Vagina (tissue), 2 donors: ENCODE measurements at regions of chr17 and their contacts with region 1.

Region 1: GRCh38 chr17:12667299-12667958 is 1.7 kb downstream of the MYOCD start:
- DNase-seq: no peak
- H3K4me3 ChIP-seq: peak overlapping the region; percentile 48 to 49
- H3K27ac ChIP-seq: no peak overlapping the region
- H3K4me1 ChIP-seq: peaks cover 18% of the 10 kb centered on the region
- H3K27me3 ChIP-seq: peaks cover 7% of the 10 kb centered on the region
- CTCF ChIP-seq: peak; percentile 15 to 50 (median 22)
- POLR2A ChIP-seq: no peak

Region 2: DNA sequence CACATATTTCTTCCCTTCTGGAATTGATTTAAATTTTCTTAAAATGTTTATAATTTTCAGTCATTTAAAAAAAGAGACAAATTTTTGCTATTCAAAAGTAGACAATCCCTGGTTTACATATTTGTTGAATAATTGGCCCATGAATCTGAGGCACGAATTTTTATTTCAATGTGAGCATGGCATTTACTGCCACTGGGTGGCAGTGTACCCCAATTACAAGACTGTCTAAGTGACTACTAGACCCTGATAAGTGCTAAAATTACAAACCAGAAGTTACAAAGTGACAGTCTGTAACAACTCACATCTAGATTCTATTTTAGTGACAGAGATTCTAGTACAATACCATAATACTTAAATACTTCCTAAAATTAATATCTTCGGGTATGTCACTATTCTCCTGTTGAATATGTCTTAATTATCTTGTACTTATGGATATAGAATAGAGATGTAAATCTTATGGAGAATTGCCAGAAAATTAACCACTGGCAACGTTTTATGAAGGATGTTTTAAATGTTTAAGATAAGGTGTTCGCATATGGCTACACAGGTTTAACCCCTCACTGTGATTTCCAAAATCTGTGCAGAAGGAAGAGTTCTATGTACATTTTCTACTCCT is 410.9 kb before region 1 on chr17:
- intact Hi-C with region 1: loop called (anchors 5 kb)
- DNase-seq: no peak
- H3K4me3 ChIP-seq: no peak overlapping the region
- H3K27ac ChIP-seq: no peak overlapping the region
- H3K4me1 ChIP-seq: no peaks in the 10 kb centered on the region
- H3K27me3 ChIP-seq: no peaks in the 10 kb centered on the region
- CTCF ChIP-seq: peak; percentile 32 to 69 (median 52)
- POLR2A ChIP-seq: no peak

Region 3: DNA sequence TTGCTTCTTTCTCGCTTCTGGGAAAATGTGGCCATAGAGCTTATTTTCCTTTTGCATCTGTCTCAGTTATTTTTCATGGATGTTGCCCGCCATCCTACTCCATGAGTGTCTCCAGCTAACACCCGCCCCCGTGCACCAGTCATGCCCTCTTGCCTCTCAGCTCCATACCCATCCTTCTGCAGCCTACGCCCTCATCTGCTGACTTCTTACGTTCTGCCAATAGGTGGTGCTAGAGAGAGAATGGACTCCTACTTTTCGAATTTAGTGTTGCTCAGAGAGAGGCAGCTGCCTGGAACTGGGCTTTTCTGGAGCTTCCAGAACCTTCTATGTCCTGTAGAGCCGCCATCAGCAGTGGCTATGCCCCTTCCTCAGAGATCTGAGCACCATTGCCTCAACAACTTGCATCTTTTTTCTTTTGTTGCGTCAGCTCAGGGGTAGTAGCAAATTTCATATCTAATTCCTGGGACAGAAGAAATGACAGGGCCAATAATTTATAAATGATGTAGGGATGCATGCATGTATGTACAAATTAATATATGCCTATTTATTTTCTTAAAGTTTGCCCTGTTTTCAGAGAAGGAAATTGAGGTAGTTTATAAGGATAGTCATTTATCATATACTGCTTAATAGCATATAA is 121.4 kb before region 1 on chr17:
- intact Hi-C with region 1: loop called (anchors 2 kb)
- DNase-seq: no peak
- H3K4me3 ChIP-seq: no peak overlapping the region
- H3K27ac ChIP-seq: no peak overlapping the region
- H3K4me1 ChIP-seq: no peaks in the 10 kb centered on the region
- H3K27me3 ChIP-seq: no peaks in the 10 kb centered on the region
- CTCF ChIP-seq: peak in 1 of 3 experiments; percentile 44
- POLR2A ChIP-seq: no peak

Region 4: GRCh38 chr17:12691182-12691581 is 23.8 kb after region 1 on chr17:
- intact Hi-C with region 1: no loop called
- DNase-seq: no peak
- H3K4me3 ChIP-seq: no peak overlapping the region
- H3K27ac ChIP-seq: peak overlapping the region; percentile 44
- H3K4me1 ChIP-seq: no peaks in the 10 kb centered on the region
- H3K27me3 ChIP-seq: no peaks in the 10 kb centered on the region
- CTCF ChIP-seq: no peak
- POLR2A ChIP-seq: no peak

Region 5: DNA sequence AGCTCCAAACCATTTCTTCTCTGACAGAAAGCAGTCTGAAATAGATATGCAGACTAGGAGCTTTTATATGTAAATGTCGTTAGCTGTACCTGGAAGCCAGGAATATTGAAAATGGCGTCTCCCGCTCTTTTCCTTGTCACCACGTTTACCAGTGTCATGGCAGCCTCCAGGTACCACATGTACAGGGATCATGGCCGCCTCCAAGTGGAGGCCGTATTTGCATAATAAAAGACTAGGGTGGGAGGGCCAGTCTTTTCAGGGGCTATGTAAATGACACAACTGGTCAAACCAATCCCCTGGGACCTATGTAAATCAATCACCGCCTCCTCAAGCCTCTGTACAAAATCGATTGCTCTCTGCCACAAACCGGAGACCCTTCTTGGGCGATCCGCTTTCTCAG is 52.5 kb after region 1 on chr17:
- intact Hi-C with region 1: loop called (anchors 5 kb)
- DNase-seq: peak in 1 of 2 donors; percentile 32
- H3K4me3 ChIP-seq: no peak overlapping the region
- H3K27ac ChIP-seq: no peak overlapping the region
- H3K4me1 ChIP-seq: no peaks in the 10 kb centered on the region
- H3K27me3 ChIP-seq: no peaks in the 10 kb centered on the region
- CTCF ChIP-seq: no peak
- POLR2A ChIP-seq: no peak